Sigmoid colon (tissue), 7 donors: ENCODE measurements at regions of chr13 and their contacts with region 1.

Region 1: DNA sequence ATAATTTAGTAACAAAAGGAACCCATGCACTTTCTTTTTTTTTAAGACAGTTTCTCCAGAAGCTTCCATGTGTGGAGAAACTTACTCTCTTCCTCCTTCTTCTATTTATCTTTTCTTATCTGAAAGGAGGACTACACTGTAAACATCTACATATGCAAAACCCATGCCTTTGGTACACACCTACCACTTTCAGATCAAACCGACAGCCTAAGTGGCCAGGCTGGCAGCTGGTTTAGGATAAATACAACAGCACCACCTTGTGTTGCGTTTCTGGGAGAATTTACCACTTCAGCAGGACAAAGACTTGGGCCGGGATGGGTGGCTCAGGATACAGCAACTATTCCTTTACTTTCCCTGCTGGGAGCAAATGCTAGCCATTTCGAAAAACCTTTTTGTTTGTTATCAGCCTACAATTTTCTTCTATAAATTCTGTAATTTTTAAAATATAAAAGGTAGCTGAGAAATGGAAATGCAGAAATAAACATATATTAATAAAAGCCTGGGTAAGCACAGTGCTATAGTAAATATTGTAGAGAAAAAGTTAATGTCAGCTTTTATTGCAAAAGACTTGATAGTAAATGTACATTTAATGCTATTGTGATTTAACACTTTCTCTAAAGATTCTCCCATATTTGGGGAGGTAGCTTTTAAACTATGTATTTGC is 94.0 kb upstream of the RFC3 start:
- DNase-seq: peak; percentile 90
- H3K4me3 ChIP-seq: no peak overlapping the region
- H3K27ac ChIP-seq: peak overlapping the region; percentile 61 to 72 (median 70)
- H3K4me1 ChIP-seq: peaks cover 0 to 37% (median 28%) of the 10 kb centered on the region in 4 donors
- H3K27me3 ChIP-seq: no peaks in the 10 kb centered on the region
- CTCF ChIP-seq: peak; percentile 55 to 81 (median 68)
- EP300 ChIP-seq: no peak
- POLR2A ChIP-seq: no peak

Region 2: GRCh38 chr13:32650705-32651311 is 1073.1 kb before region 1 on chr13:
- intact Hi-C with region 1: loop called (anchors 10 kb)
- DNase-seq: no peak
- H3K4me3 ChIP-seq: no peak overlapping the region
- H3K27ac ChIP-seq: no peak overlapping the region
- H3K4me1 ChIP-seq: peaks cover 0 to 37% (median 6%) of the 10 kb centered on the region in 4 donors
- H3K27me3 ChIP-seq: no peaks in the 10 kb centered on the region
- CTCF ChIP-seq: peak in 3 of 4 experiments; percentile 19 to 68 (median 58)
- EP300 ChIP-seq: no peak
- POLR2A ChIP-seq: no peak

Region 3: GRCh38 chr13:33678906-33679657 is 44.8 kb before region 1 on chr13:
- intact Hi-C with region 1: loop called (anchors 5 kb)
- DNase-seq: peak; percentile 72
- H3K4me3 ChIP-seq: no peak overlapping the region
- H3K27ac ChIP-seq: peak overlapping the region in 2 of 4 donors; percentile 18 to 36
- H3K4me1 ChIP-seq: peaks cover 0 to 27% (median 16%) of the 10 kb centered on the region in 4 donors
- H3K27me3 ChIP-seq: no peaks in the 10 kb centered on the region
- CTCF ChIP-seq: no peak
- EP300 ChIP-seq: no peak
- POLR2A ChIP-seq: no peak

Region 4: GRCh38 chr13:33690354-33690753 is 33.5 kb before region 1 on chr13:
- intact Hi-C with region 1: no loop called
- DNase-seq: no peak
- H3K4me3 ChIP-seq: no peak overlapping the region
- H3K27ac ChIP-seq: no peak overlapping the region
- H3K4me1 ChIP-seq: no peaks in the 10 kb centered on the region
- H3K27me3 ChIP-seq: no peaks in the 10 kb centered on the region
- CTCF ChIP-seq: no peak
- EP300 ChIP-seq: no peak
- POLR2A ChIP-seq: no peak

Region 5: GRCh38 chr13:33945477-33945876 is 221.6 kb after region 1 on chr13:
- intact Hi-C with region 1: no loop called
- DNase-seq: no peak
- H3K4me3 ChIP-seq: no peak overlapping the region
- H3K27ac ChIP-seq: no peak overlapping the region
- H3K4me1 ChIP-seq: no peaks in the 10 kb centered on the region
- H3K27me3 ChIP-seq: no peaks in the 10 kb centered on the region
- CTCF ChIP-seq: no peak
- EP300 ChIP-seq: no peak
- POLR2A ChIP-seq: no peak